Vagina (tissue), 2 donors: ENCODE measurements at regions of chr21 and their contacts with region 1.

Region 1: DNA sequence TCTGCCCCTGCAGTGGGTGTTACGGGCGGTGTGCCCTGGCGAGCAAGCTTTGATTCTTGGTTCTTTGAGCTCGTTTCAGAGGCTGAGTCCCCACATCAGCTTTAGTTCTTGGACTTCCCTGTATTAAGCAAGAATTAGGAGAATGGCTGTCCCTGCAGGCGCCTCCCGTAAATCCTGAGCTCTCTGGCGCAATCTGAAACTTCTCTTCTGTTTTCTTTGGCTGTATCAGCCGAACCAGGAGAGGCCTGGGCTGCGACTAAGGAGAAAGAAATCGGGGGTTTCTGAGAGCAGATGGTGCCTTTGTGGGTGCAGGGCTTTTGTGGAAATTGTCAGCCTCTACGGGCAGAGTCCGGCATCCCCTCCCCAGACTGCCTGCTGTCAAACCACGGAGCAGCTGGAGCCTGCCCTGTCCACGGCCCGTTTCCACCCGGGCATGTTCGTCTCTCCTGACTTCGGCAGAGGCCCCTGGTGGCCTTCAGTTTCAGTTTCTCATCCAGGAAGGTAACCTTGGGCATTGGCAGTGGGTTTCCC is 17.9 kb downstream of the CSTB start:
- DNase-seq: no peak
- H3K4me3 ChIP-seq: peak overlapping the region; percentile 34 to 44
- H3K27ac ChIP-seq: peak overlapping the region; percentile 88
- H3K4me1 ChIP-seq: peaks cover 41% of the 10 kb centered on the region
- H3K27me3 ChIP-seq: no peaks in the 10 kb centered on the region
- CTCF ChIP-seq: no peak
- POLR2A ChIP-seq: no peak

Region 2: DNA sequence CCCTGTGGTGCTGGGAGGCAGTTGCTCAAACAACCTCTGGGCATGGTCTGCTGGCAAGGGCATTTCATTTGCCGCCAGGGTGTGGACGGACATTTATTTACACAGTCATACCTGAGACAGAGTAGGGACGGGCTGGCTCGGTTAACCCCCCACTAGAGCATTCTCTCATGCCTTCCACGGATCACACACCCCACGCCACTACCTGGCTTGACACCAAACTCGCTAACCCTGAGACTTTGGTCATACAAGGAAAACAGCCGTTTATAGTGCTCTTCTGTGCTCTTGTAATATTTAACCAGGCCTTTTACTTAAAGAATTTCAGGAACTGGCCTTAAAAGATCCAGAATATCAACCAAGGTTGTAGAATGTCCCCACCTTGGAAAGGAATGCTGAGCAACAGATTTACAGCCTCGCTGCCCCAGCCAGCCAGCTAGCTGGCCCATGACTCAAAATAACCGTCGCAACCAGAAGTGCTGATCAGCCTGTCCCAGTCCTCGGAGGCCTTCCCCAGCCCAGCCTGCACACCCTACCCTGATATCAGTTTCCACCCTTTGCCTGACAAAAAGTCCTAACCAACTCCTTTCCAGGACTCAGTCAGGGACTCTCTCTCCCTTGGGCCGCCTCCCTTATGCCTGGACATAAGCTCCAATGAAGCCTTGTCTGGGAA is 45.7 kb before region 1 on chr21:
- intact Hi-C with region 1: no loop called
- DNase-seq: no peak
- H3K4me3 ChIP-seq: no peak overlapping the region
- H3K27ac ChIP-seq: peak overlapping the region; percentile 26
- H3K4me1 ChIP-seq: no peaks in the 10 kb centered on the region
- H3K27me3 ChIP-seq: no peaks in the 10 kb centered on the region
- CTCF ChIP-seq: no peak
- POLR2A ChIP-seq: no peak

Region 3: DNA sequence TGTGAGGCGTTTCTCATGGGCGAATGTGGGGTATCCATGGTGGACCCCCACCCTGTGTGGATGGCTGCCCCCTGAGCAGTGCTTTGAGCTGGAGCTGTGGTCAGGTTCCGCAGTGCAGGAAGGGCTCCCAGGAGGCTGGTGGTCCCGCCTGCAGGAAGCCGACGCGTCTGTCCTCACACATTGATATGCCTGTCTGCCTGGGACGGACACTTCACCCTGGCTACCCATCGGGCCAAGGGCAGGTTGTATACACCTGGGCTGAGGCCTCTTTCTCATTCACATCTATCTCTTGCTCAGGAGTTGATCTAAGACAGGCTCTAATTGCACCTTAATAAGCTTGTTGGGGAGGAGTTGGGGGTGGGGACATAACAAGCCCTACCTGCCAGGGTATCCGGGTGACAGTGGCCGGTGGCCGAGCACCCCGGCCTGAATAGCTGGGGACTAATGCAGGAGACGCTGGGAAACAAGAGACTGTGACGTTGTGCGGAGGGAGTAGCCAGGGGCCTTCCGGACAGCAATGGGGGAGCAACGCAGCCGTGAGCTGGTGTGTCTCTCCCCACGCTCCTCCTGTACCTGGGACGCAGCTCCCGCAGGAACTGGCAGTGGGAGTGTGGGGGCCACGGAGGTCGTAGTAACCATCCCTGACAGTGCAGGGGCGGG is 17.5 kb before region 1 on chr21:
- intact Hi-C with region 1: no loop called
- DNase-seq: no peak
- H3K4me3 ChIP-seq: no peak overlapping the region
- H3K27ac ChIP-seq: peak overlapping the region; percentile 83
- H3K4me1 ChIP-seq: peaks cover 6% of the 10 kb centered on the region
- H3K27me3 ChIP-seq: no peaks in the 10 kb centered on the region
- CTCF ChIP-seq: no peak
- POLR2A ChIP-seq: no peak

Region 4: DNA sequence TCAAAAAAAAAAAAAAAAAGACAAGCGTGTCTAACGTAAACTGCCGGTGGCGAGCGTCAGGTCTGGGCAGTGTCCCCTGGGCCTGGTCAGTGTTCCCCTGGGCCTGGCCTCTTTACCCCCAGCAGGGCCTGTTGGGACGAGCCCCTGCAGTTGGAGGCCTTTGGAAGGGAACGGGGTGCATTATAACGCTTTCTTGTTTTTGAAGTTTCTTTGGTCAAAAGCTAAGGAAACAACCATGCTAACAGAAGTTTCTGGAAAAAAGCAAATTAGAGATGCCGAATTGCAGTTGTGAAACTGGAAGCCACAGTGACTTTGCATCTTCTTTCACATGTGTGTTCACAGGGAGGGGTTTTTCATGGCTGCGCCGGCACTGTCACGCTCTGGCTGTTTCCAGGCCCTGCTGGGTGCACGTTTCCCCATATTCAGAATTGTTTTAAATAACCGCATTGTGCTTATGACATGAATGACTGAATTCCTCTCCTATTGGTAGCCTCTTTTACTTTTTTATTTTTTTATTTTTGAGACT is 47.2 kb after region 1 on chr21:
- intact Hi-C with region 1: loop called (anchors 10 kb)
- DNase-seq: no peak
- H3K4me3 ChIP-seq: no peak overlapping the region
- H3K27ac ChIP-seq: no peak overlapping the region
- H3K4me1 ChIP-seq: peaks cover 15% of the 10 kb centered on the region
- H3K27me3 ChIP-seq: no peaks in the 10 kb centered on the region
- CTCF ChIP-seq: no peak
- POLR2A ChIP-seq: no peak